OCI-LY7 (cell line): ENCODE measurements at regions of chr4 and their contacts with region 1.

Region 1: DNA sequence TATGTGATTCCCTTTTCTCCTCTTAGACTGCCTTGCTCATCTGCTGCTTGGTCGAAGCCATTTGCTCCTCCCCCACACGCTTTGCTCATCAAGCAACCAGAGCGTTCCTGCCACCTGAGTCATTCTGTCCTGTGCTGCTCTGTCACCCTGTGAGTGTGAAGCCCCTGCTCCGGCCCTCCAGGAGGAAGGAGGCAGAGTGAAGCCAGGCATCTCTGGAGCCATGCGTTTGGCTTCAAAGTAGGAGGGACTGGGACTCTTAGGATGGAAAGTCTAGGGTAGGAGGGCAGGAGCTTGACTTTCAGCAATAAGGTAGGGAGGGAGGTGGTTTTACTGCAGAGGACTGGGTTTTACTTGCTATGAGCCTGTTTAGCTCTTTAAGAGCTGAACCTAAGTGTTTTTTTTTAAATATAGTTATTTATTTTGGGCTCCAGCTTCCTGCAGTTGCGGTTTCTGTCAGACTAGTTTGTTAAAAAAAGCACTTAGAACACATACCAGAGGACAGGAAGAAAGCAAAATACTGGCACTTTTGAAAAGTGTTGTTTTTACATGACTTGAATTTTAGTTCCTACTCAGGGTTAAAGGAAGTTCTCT is 63.6 kb downstream of the SPINK2 start:
- DNase-seq: peak; percentile 90
- H3K4me3 ChIP-seq: peak overlapping the region; percentile 63
- H3K27ac ChIP-seq: peak overlapping the region; percentile 98
- H3K4me1 ChIP-seq: peaks cover 66% of the 10 kb centered on the region
- CTCF ChIP-seq: no peak

Region 2: GRCh38 chr4:56668298-56668697 is 89.6 kb before region 1 on chr4:
- CTCF ChIA-PET with region 1: no interaction called
- POLR2A ChIA-PET with region 1: interaction called, 4 read pairs
- intact Hi-C with region 1: loop called (anchors 2 kb)
- DNase-seq: peak; percentile 56
- H3K4me3 ChIP-seq: no peak overlapping the region
- H3K27ac ChIP-seq: no peak overlapping the region
- H3K4me1 ChIP-seq: no peaks in the 10 kb centered on the region
- CTCF ChIP-seq: peak; percentile 80

Region 3: DNA sequence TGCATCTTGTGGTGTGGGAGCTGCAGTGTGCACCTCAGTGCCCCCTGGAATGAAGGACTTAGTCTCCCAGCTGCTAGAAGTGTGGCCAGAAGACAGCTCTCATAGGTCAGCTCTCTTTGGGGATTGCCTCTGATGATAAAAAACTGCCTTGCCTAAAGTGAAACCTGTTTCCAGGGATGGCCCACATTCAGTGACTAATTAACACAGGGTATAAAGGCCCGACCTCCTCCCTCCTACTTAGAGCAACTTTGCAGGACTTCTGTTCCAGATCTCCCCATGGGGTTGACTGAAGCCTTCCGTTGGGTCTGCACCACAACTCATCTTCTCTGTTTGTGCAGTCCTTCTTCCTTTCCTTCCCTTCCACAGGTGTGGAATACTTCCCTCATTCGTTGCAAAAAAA is 10.4 kb after region 1 on chr4:
- CTCF ChIA-PET with region 1: interaction called, 4 read pairs
- POLR2A ChIA-PET with region 1: interaction called, 21 read pairs
- intact Hi-C with region 1: no loop called
- DNase-seq: no peak
- H3K4me3 ChIP-seq: no peak overlapping the region
- H3K27ac ChIP-seq: no peak overlapping the region
- H3K4me1 ChIP-seq: peaks cover 11% of the 10 kb centered on the region
- CTCF ChIP-seq: no peak

Region 4: DNA sequence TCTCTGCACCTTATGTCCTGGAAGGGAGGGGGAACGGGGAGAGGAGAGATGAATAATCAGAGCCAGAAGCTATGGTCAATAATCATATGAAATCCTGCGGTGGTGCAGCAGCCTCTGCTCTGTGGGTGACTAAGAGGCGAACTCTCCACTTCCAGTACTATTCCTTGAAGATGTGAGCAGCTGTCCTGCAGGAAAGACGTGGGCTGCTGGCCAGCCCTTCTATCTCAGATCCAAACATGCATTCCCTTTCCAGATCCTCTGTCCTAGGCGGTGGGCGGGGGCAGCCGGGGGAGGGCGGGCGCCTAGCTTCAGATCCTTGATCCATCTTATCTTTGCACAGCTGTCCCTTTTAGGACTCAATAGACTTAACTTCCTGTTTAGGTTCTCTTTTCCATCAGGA is 29.0 kb after region 1 on chr4:
- CTCF ChIA-PET with region 1: interaction called, 5 read pairs
- POLR2A ChIA-PET with region 1: interaction called, 8 read pairs
- intact Hi-C with region 1: loop called (anchors 2 kb)
- DNase-seq: no peak
- H3K4me3 ChIP-seq: no peak overlapping the region
- H3K27ac ChIP-seq: no peak overlapping the region
- H3K4me1 ChIP-seq: peaks cover 17% of the 10 kb centered on the region
- CTCF ChIP-seq: no peak

Region 5: DNA sequence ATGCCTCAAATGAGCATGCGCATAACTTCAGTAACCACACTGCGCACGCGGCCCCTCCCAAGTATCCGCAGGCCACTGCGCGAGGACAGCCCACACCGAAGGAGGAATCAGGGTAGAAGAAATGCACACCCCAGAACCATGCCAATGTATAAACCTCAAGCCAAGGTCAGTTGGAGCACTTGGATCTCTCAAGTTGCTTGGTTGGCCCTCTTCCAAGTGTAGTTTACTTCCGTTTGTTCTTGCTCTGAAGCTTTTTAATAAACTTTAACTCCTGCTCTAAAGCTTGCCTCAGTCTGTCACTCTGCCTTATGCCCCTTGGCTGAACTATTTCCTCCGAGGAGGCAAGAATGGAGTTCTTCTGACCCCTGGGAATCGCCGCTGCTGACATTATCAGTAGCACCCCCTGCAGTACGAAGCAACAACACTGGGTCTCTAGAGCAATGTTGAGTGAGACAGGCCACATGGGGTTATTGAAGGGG is 85.5 kb after region 1 on chr4:
- CTCF ChIA-PET with region 1: no interaction called
- POLR2A ChIA-PET with region 1: interaction called, 3 read pairs
- intact Hi-C with region 1: loop called (anchors 5 kb)
- DNase-seq: no peak
- H3K4me3 ChIP-seq: no peak overlapping the region
- H3K27ac ChIP-seq: no peak overlapping the region
- H3K4me1 ChIP-seq: peaks cover 5% of the 10 kb centered on the region
- CTCF ChIP-seq: no peak